ENCODE measurements at regions of chr10 and their contacts with region 1.

Region 1: GRCh38 chr10:97736902-97737769 is at the start of gene ZFYVE27:
- DNase-seq: peak; percentile 93 to 94 (median 93)
- H3K4me3 ChIP-seq: peak within 1 kb of the TSS; percentile 86 to 87
- H3K4me3 Mint-ChIP-seq: peak within 1 kb of the TSS; percentile 96 to 99 (median 98)
- H3K27ac ChIP-seq: peak within 1 kb of the TSS; percentile 92
- H3K27ac Mint-ChIP-seq: peak within 1 kb of the TSS; percentile 94 to 99 (median 98)
- H3K4me1 ChIP-seq: peaks cover 41% of the 10 kb centered on the region
- H3K4me1 Mint-ChIP-seq: peaks cover 38 to 61% (median 50%) of the 10 kb centered on the region in 4 donors
- H3K27me3 ChIP-seq: no peaks in the 10 kb centered on the region
- H3K27me3 Mint-ChIP-seq: no peaks in the 10 kb centered on the region
- total RNA-seq, gene ZFYVE27: 59.5 to 64.5 TPM

Region 2: DNA sequence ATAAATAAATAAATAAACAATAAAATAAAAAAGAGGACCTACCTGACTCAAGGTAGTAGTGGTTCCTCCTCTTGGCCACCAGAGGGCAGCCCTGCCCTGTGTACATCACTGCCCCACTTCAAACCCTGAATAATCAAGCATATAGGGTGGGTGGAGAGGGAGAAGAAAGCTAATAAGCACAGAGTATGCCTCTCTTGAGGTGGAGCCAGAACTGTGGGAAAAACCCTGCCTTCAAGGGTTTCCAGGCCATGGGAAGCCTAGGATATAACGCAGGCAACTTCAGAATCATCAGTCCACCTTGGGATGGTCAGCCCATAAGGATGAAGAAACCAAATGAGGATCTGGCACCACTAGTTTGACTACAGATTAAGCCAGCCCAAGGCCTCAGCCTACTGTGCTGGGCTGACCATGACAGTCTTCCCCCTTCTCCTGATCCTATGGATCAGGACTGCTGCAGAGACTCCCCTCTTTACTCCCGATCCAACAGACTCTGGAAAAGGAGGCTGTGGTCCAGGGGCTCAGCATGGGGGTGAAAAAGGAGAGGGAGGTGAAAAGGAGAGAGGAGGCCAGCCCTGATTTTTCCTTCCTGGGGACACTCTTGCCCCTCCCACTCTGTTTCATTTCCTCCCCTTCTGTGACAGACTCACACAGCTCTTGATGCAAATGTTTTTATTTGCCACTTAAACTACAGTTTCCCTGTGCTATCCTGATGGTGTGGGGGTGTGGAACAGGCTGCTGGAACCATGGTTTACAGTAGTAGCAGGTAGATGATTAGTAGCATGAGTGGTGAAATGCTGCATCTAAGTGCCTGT is 60.2 kb before region 1 on chr10:
- CTCF ChIA-PET with region 1: interaction called, 159 read pairs
- POLR2A ChIA-PET with region 1: interaction called, 4 read pairs
- intact Hi-C with region 1: no loop called
- DNase-seq: peak; percentile 48 to 56 (median 53)
- H3K4me3 ChIP-seq: no peak overlapping the region
- H3K4me3 Mint-ChIP-seq: no peak overlapping the region
- H3K27ac ChIP-seq: no peak overlapping the region
- H3K27ac Mint-ChIP-seq: peak overlapping the region in 4 of 7 donors; percentile 7 to 73 (median 38)
- H3K4me1 ChIP-seq: no peaks in the 10 kb centered on the region
- H3K4me1 Mint-ChIP-seq: peaks cover 0 to 1% (median 0%) of the 10 kb centered on the region in 4 donors
- H3K27me3 ChIP-seq: no peaks in the 10 kb centered on the region
- H3K27me3 Mint-ChIP-seq: no peaks in the 10 kb centered on the region

Region 3: DNA sequence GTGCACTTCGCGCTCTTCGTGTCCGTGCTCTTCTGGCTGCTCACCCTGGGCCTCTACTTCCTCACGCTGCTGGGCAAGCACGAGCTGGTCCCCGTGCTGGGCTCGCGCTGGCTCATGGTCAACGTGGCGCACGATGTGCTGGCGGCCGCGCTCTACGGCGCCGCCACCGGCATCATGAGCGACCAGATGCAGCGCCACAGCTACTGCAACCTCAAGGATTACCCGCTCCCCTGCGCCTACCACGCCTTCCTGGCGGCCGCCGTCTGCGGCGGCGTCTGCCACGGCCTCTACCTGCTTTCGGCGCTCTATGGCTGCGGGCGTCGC is 23.1 kb before region 1 on chr10:
- CTCF ChIA-PET with region 1: interaction called, 436 read pairs
- POLR2A ChIA-PET with region 1: interaction called, 16 read pairs
- intact Hi-C with region 1: loop called (anchors 1 kb)
- DNase-seq: peak; percentile 50 to 69 (median 54)
- H3K4me3 ChIP-seq: peak overlapping the region; percentile 30 to 55
- H3K4me3 Mint-ChIP-seq: peak overlapping the region; percentile 98 to 100 (median 99)
- H3K27ac ChIP-seq: no peak overlapping the region
- H3K27ac Mint-ChIP-seq: peak overlapping the region; percentile 37 to 96 (median 92)
- H3K4me1 ChIP-seq: peaks cover 6% of the 10 kb centered on the region
- H3K4me1 Mint-ChIP-seq: peaks cover 7 to 22% (median 14%) of the 10 kb centered on the region in 4 donors
- H3K27me3 ChIP-seq: no peaks in the 10 kb centered on the region
- H3K27me3 Mint-ChIP-seq: peaks cover 7 to 9% of the 10 kb centered on the region in 2 donors

Region 4: GRCh38 chr10:97849687-97850402 is 112.7 kb after region 1 on chr10 and contains the start of gene GOLGA7B:
- CTCF ChIA-PET with region 1: no interaction called
- POLR2A ChIA-PET with region 1: interaction called, 14 read pairs
- intact Hi-C with region 1: no loop called
- DNase-seq: peak; percentile 60 to 72 (median 70)
- H3K4me3 ChIP-seq: peak within 1 kb of the TSS; percentile 76 to 79
- H3K4me3 Mint-ChIP-seq: peak within 1 kb of the TSS; percentile 92 to 98 (median 94)
- H3K27ac ChIP-seq: peak within 1 kb of the TSS; percentile 32
- H3K27ac Mint-ChIP-seq: peak within 1 kb of the TSS; percentile 87 to 94 (median 91)
- H3K4me1 ChIP-seq: peaks cover 40% of the 10 kb centered on the region
- H3K4me1 Mint-ChIP-seq: peaks cover 29 to 46% (median 39%) of the 10 kb centered on the region in 4 donors
- H3K27me3 ChIP-seq: no peaks in the 10 kb centered on the region
- H3K27me3 Mint-ChIP-seq: no peaks in the 10 kb centered on the region
- total RNA-seq, gene GOLGA7B: 7.6 to 7.9 TPM